Panc1 (cell line): ENCODE measurements at regions of chr12 and their contacts with region 1.

Region 1: GRCh38 chr12:124321040-124321481 is 26.2 kb downstream of the RFLNA start:
- DNase-seq: peak; percentile 39
- ATAC-seq: peak; percentile 88
- H3K4me3 ChIP-seq: no peak overlapping the region
- H3K27ac ChIP-seq: no peak overlapping the region
- H3K4me1 ChIP-seq: peaks cover 4% of the 10 kb centered on the region
- H3K27me3 ChIP-seq: no peaks in the 10 kb centered on the region
- CTCF ChIP-seq: peak; percentile 92

Region 2: GRCh38 chr12:123075646-123076171 is 1245.4 kb before region 1 on chr12:
- CTCF ChIA-PET with region 1: no interaction called
- POLR2A ChIA-PET with region 1: no interaction called
- in situ Hi-C with region 1: no loop called
- intact Hi-C with region 1: no loop called
- DNase-seq: no peak
- ATAC-seq: no peak
- H3K4me3 ChIP-seq: no peak overlapping the region
- H3K27ac ChIP-seq: peak overlapping the region; percentile 39; the same call in 1 of the 2 replicates
- H3K4me1 ChIP-seq: peaks cover 13% of the 10 kb centered on the region
- H3K27me3 ChIP-seq: no peaks in the 10 kb centered on the region
- CTCF ChIP-seq: no peak

Region 3: DNA sequence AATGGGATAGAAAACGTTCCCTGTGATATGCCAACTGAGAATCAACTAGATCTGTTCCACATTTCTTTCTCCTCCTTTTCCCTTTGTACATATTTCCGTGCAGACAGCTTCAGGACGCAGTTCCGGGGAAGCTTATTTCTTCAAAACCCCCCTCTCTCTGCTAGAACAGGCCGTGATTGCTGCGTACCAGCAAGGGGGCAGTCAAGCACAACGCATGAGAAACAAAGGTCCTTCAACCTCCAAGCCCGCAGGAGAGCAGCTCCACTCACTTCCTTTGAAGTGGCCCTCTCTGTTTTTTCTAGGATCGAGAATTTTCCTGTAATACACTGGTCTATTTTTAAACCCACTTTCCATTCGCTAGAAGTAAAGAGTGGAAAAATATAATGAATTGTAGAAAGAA is 267.2 kb before region 1 on chr12:
- CTCF ChIA-PET with region 1: interaction called, 4 read pairs
- POLR2A ChIA-PET with region 1: no interaction called
- in situ Hi-C with region 1: no loop called
- intact Hi-C with region 1: loop called (anchors 5 kb)
- DNase-seq: no peak
- ATAC-seq: peak; percentile 72; the same call in 1 of the 2 replicates
- H3K4me3 ChIP-seq: no peak overlapping the region
- H3K27ac ChIP-seq: no peak overlapping the region
- H3K4me1 ChIP-seq: no peaks in the 10 kb centered on the region
- H3K27me3 ChIP-seq: no peaks in the 10 kb centered on the region
- CTCF ChIP-seq: peak; percentile 74

Region 4: GRCh38 chr12:124480469-124481256 is 159.6 kb after region 1 on chr12:
- CTCF ChIA-PET with region 1: no interaction called
- POLR2A ChIA-PET with region 1: no interaction called
- in situ Hi-C with region 1: no loop called
- intact Hi-C with region 1: no loop called
- DNase-seq: no peak
- ATAC-seq: peak; percentile 54
- H3K4me3 ChIP-seq: no peak overlapping the region
- H3K27ac ChIP-seq: peak overlapping the region; percentile 66; the same call in 1 of the 2 replicates
- H3K4me1 ChIP-seq: peaks cover 20% of the 10 kb centered on the region
- H3K27me3 ChIP-seq: no peaks in the 10 kb centered on the region
- CTCF ChIP-seq: no peak